Heart right ventricle (tissue), 16 donors: ENCODE measurements at regions of chr7 and their contacts with region 1.

Region 1: DNA sequence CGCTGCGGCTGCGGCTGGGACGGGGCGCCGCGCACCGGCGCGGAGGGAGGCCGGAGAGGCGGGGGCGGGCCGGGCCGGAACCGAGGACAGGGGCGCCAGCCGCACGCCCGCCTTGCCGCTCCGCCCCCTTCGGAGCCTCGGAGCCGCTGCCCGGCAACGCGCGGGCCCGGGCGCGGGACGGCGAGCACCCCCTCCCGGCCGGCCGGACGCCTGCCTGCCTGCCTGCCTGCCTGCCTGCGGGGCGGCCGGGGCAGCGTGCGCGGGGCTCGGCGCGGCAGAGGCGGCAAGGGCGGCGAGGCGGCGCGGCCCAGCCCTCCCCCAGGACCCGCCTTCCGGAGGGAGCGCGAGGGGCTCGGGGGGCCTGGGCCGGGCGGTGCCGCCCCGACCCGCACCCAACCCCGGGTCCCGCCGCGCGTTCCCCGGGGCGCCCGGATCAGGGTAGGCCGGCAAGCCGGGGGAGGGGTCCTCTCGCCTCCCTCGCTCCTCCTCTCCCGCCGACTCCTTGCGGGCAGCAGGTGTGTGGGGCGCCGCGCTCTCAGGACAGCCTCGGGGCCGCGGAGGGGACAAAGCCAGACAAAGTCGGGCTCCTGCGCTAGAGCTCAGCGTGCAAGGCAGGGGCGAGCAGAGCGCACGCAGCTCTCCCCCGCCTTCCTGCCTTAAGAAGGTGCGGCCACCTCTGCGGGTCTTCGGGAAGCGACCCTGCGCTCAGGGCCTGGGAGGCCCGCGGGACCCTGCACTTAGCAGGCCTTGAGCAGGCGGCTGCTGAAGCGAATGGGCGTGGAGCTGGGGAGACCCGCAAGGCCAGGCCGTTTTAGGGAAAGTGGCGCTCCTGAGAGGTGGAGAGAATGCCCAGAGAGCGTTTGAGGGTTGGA is at the start of gene KIAA1549:
- DNase-seq: peak; percentile 45 to 72
- ATAC-seq: peak; percentile 80 to 95 (median 88)
- H3K4me3 ChIP-seq: peak within 1 kb of the TSS; percentile 55 to 73 (median 64)
- H3K27ac ChIP-seq: peak within 1 kb of the TSS in 5 of 10 donors; percentile 18 to 50 (median 28)
- H3K4me1 ChIP-seq: peaks cover 0 to 20% (median 10%) of the 10 kb centered on the region in 9 donors
- H3K27me3 ChIP-seq: peaks cover 0 to 37% (median 0%) of the 10 kb centered on the region in 7 donors
- CTCF ChIP-seq: peak in 4 of 9 donors; percentile 11 to 42 (median 32)
- total RNA-seq, gene KIAA1549: 1.1 to 2.1 (median 1.6) TPM

Region 2: GRCh38 chr7:138880881-138881578 is 100.5 kb before region 1 on chr7:
- intact Hi-C with region 1: loop called in 8 of 10 experiments (anchors 2 to 10 kb)
- DNase-seq: peak; percentile 50 to 59
- ATAC-seq: peak; percentile 47 to 88 (median 77)
- H3K4me3 ChIP-seq: no peak overlapping the region
- H3K27ac ChIP-seq: peak overlapping the region in 2 of 10 donors; percentile 19 to 28
- H3K4me1 ChIP-seq: peaks cover 4 to 15% (median 9%) of the 10 kb centered on the region in 9 donors
- H3K27me3 ChIP-seq: no peaks in the 10 kb centered on the region
- CTCF ChIP-seq: no peak

Region 3: GRCh38 chr7:138886501-138886917 is 95.1 kb before region 1 on chr7:
- intact Hi-C with region 1: loop called in 8 of 10 experiments (anchors 2 to 10 kb)
- DNase-seq: peak in 1 of 2 donors; percentile 50
- ATAC-seq: peak in 3 of 8 donors; percentile 21 to 41 (median 30)
- H3K4me3 ChIP-seq: no peak overlapping the region
- H3K27ac ChIP-seq: no peak overlapping the region
- H3K4me1 ChIP-seq: peaks cover 0 to 17% (median 2%) of the 10 kb centered on the region in 9 donors
- H3K27me3 ChIP-seq: no peaks in the 10 kb centered on the region
- CTCF ChIP-seq: peak; percentile 48 to 72 (median 68)

Region 4: GRCh38 chr7:138898255-138898654 is 83.3 kb before region 1 on chr7:
- intact Hi-C with region 1: loop called in 1 of 10 experiments (anchors 5 kb)
- DNase-seq: no peak
- ATAC-seq: no peak
- H3K4me3 ChIP-seq: no peak overlapping the region
- H3K27ac ChIP-seq: no peak overlapping the region
- H3K4me1 ChIP-seq: no peaks in the 10 kb centered on the region
- H3K27me3 ChIP-seq: no peaks in the 10 kb centered on the region
- CTCF ChIP-seq: no peak